Spleen (tissue), 13 donors: ENCODE measurements at regions of chr12 and their contacts with region 1.

Region 1: DNA sequence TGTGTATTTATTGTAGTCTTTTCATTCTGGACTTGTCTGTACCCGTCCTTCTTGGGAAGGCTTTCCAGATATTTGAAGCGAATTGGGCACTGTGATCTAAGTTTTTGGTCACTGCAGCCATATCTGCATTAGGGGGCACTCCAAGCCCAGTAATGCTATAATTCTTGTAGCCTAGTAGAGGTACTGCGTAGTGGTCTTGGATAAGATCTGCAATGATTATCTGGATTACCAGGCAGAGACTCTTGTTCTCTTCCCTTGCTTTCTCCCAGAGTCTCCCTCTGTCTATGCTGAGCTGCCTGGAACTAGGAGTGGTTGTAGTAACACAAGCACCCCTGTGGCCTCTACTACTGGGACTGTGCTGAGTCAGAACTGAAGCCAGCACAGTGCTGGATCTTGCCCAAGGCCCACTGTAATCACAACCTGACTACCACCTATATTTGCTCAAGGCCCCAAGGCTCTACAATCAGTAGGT is 30.0 kb downstream of the SLC38A2 start:
- DNase-seq: no peak
- H3K4me3 ChIP-seq: no peak overlapping the region
- H3K27ac ChIP-seq: no peak overlapping the region
- H3K4me1 ChIP-seq: peaks cover 0 to 4% (median 0%) of the 10 kb centered on the region in 6 donors
- H3K27me3 ChIP-seq: no peaks in the 10 kb centered on the region
- CTCF ChIP-seq: peak in 10 of 11 experiments; percentile 47 to 83 (median 64)
- POLR2A ChIP-seq: no peak

Region 2: GRCh38 chr12:46124848-46125619 is 217.6 kb before region 1 on chr12:
- intact Hi-C with region 1: no loop called
- DNase-seq: no peak
- H3K4me3 ChIP-seq: peak overlapping the region in 2 of 8 donors; percentile 24 to 40
- H3K27ac ChIP-seq: peak overlapping the region in 1 of 8 donors; percentile 22
- H3K4me1 ChIP-seq: peaks cover 0 to 8% (median 2%) of the 10 kb centered on the region in 6 donors
- H3K27me3 ChIP-seq: no peaks in the 10 kb centered on the region
- CTCF ChIP-seq: peak; percentile 32 to 86 (median 64)
- POLR2A ChIP-seq: no peak

Region 3: DNA sequence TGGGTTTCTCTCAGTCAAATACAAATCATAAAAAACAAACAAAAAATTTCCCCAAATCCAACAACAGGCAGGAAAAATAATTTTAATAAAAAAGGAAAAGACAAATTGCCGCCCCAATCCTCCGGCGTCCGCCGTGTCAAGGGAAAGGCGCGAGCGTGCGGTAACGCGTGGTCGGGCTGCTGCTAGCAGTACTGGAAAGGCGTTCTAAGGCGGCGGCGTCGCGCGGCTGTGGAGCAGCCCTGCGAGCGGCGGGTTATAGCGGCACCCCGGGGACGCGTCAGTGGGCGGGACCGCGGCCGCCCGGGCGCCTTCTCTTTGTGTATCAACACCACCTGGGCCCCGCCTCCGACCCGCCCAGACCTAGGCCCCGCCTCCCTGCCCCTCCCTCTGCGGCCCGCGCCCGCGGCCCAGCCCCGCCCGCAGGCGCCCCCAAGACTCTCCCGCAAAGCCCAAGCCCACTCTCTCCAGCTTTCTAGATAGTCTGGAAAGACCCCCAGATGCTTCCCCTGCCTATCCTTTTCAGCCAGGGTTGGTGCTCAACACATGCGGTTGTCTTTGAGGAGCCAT is 30.0 kb after region 1 on chr12 and contains the start of gene SLC38A2:
- intact Hi-C with region 1: no loop called
- DNase-seq: peak; percentile 100
- H3K4me3 ChIP-seq: peak within 1 kb of the TSS; percentile 84 to 99 (median 94)
- H3K27ac ChIP-seq: peak within 1 kb of the TSS; percentile 90 to 100 (median 98)
- H3K4me1 ChIP-seq: peaks cover 30 to 54% (median 47%) of the 10 kb centered on the region in 6 donors
- H3K27me3 ChIP-seq: no peaks in the 10 kb centered on the region
- CTCF ChIP-seq: peak in 1 of 11 experiments; percentile 17
- POLR2A ChIP-seq: peak; percentile 97 to 100 (median 98)
- total RNA-seq, gene SLC38A2: 118 to 297 (median 211) TPM

Region 4: GRCh38 chr12:47021298-47021697 is 678.7 kb after region 1 on chr12:
- intact Hi-C with region 1: loop called (anchors 5 kb)
- DNase-seq: no peak
- H3K4me3 ChIP-seq: no peak overlapping the region
- H3K27ac ChIP-seq: no peak overlapping the region
- H3K4me1 ChIP-seq: no peaks in the 10 kb centered on the region
- H3K27me3 ChIP-seq: no peaks in the 10 kb centered on the region
- CTCF ChIP-seq: peak; percentile 39 to 71 (median 63)
- POLR2A ChIP-seq: no peak